Left cardiac atrium (tissue), 4 donors: ENCODE measurements at regions of chr16 and their contacts with region 1.

Region 1: GRCh38 chr16:50627419-50627818 is 53.7 kb downstream of the SNX20 start:
- DNase-seq: peak; percentile 63
- ATAC-seq: peak; percentile 81 to 87

Region 2: DNA sequence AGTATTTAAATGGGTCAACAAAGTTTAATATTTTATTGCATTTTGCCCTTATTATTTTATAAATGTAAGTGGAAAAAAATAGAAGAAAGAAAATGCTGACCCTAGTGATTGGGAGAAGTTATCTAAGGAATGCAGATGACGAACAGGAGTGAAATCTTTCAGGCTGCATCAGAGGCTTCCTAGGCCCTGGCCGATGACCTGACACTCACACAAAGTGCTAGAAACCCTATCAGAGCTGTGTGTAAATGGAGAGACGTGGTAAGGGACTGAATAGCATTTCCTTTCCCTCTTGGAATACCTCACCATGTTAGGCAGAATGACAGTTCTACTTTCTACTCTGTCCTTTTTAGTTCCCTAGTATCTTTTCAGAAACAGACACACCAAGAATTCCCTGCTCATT is 647.3 kb before region 1 on chr16:
- intact Hi-C with region 1: no loop called
- DNase-seq: no peak
- ATAC-seq: peak in 1 of 2 donors; percentile 56

Region 3: DNA sequence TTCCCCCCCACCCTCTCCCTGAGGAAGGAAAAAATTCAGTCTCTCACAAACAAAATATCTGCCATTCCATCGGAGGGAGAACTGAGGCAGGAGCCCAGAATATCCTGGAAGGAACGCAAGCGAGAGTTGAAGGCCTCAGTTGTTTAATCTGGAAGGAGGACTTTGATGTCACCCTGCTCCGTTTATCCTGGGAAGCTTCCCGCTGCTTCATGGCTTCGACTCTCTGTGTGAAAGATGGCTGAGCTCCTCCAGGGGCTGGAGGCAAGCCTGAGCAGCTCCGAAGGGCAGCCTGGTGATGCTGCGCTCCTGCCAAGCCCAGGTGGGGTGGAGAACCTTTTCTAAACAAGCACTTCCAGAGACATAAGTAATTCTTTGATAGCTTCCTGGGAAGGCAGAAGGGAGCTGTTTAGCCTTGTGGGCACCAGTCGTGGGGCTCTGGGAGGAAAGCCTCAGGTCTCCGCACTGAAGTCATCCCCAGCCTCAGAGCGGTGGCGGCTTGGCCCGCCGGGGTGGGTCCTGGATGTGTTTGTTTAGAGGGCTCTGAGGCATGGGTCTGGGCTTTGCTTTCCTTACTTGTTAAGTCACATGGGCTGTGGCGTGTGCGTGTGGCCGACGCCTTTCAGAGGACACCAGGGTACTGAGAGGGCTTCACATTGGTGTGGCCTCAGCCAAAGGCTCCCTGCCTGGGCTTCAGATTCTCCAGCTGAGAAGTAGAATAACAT is 71.3 kb before region 1 on chr16:
- intact Hi-C with region 1: no loop called
- DNase-seq: no peak
- ATAC-seq: peak in 1 of 2 donors; percentile 40

Region 4: GRCh38 chr16:50573947-50574744 is 53.3 kb before region 1 on chr16:
- intact Hi-C with region 1: loop called in 1 of 2 experiments (anchors 10 kb)
- DNase-seq: peak; percentile 39
- ATAC-seq: peak; percentile 44 to 82

Region 5: DNA sequence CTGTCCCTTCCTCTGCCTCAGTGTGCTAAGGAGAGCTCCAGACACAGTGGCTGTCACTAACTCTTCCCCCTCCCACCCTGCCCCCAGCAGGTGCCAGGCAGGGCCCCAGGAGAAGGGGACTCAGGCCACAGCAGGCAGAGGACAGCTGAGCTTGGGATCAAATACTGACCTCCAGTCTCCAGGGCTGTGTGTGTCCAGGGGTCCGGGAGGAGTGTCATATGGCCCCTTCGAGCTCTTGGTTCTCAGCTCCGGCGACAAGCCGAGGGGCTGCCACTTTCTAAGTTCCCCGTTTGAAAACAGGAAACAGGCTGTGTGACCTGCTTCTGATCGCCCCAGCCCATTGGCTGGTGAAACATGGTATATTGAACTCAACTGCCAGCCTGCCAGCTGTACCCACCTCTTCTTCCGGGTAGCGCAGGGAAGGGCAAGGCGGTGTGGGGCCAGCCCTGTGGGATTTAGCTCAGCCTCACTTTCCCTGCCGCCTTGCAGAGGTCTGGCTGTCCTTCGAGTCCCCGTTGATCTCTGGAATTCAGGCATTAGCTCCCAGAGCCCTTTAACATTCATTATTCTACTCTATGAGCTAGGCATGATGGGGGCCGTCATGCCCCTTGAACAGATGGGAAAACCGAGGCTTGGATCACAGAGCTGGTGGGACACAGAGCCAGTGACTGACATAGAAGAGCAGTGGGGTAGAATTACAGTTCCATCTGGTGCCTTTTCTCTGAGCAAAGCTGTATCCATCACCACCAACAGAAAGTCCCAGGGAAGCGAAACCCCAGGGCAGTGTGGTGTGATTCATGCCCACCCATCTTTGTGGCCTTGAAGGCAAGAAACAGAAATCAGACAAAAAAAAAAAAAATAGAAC is 53.8 kb after region 1 on chr16 and contains the start of gene SNX20:
- intact Hi-C with region 1: no loop called
- DNase-seq: no peak
- ATAC-seq: peak; percentile 60 to 64
- total RNA-seq, gene SNX20: 1.2 to 2.0 TPM

Region 6: GRCh38 chr16:50692644-50692998 is 65.2 kb after region 1 on chr16:
- intact Hi-C with region 1: no loop called
- DNase-seq: no peak
- ATAC-seq: no peak